ENCODE measurements at regions of chr12 and their contacts with region 1.

Region 1: DNA sequence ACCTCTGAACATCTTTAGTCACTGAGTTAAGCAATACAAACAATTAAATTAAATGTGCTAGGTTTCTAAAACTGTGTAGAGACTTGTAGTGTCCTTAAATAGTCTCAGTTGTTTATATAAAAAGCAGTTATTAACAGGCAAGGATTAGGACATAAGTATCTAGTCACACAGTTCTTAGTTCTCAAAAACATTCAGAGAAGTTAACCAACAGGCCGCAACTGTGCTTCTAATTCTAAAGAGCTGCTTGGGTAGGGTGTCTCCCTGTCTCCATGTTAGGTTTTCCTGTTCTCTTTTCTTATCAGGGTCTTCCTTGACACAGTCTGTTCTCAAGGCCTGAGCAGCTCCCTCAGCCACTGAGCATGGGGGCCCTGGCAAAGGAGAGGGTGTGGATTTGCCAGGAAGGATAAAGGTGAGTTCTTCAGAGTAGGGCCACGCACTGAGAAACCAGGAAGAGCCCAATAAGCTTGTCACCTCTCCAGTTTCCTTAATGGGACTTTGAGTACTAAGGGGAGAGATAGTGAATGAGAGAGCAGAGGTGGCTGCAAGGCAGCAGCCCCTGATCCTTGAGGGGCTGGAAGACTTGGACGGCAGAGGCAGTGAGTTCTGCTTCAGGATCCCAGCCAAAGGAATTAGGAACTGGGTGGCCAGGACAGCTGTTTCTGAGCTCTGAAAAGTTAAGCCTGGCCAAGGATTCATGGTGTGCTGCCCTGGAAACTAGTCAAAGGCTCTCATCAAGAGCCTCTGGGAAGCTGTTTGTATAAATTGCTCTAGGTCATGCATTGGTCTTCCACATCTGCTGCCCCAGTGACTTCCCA is 177.3 kb downstream of the MYRFL start:
- DNase-seq: no peak
- H3K4me3 ChIP-seq: no peak overlapping the region
- H3K27ac ChIP-seq: no peak overlapping the region
- H3K4me1 ChIP-seq: no peaks in the 10 kb centered on the region
- H3K27me3 ChIP-seq: no peaks in the 10 kb centered on the region

Region 2: GRCh38 chr12:70033310-70033709 is 31.0 kb after region 1 on chr12:
- CTCF ChIA-PET with region 1: no interaction called
- POLR2A ChIA-PET with region 1: interaction called, 10 read pairs
- DNase-seq: no peak
- H3K4me3 ChIP-seq: no peak overlapping the region
- H3K27ac ChIP-seq: no peak overlapping the region
- H3K4me1 ChIP-seq: no peaks in the 10 kb centered on the region
- H3K27me3 ChIP-seq: no peaks in the 10 kb centered on the region